ENCODE measurements at regions of chr11 and their contacts with region 1.

Region 1: GRCh38 chr11:9384535-9385303 is at the start of gene IPO7:
- DNase-seq: peak; percentile 83 to 97 (median 88)
- ATAC-seq: peak; percentile 96
- H3K4me3 ChIP-seq: peak within 1 kb of the TSS; percentile 90
- H3K27ac ChIP-seq: peak within 1 kb of the TSS; percentile 95
- H3K4me1 ChIP-seq: peaks cover 0 to 7% of the 10 kb centered on the region in 2 experiments; a peak in 3 of 5 replicates
- H3K27me3 ChIP-seq: no peaks in the 10 kb centered on the region
- CTCF ChIP-seq: no peak; a peak in 4 of 6 replicates
- EP300 ChIP-seq: no peak; the same call in 1 of the 2 replicates
- POLR2A ChIP-seq: peak; percentile 97
- RAD21 ChIP-seq: 0 out of 4 replicates have a peak, but pooled peaks of 1 of the 2 experiments have one; percentile 9
- polyA plus RNA-seq, gene IPO7: 23.6 to 28.7 TPM

Region 2: GRCh38 chr11:9314291-9315036 is 70.3 kb before region 1 on chr11 and contains the start of gene TMEM41B:
- CTCF ChIA-PET with region 1: no interaction called
- POLR2A ChIA-PET with region 1: interaction called, 18 read pairs
- in situ Hi-C with region 1: no loop called
- intact Hi-C with region 1: loop called (anchors 1 kb)
- DNase-seq: peak; percentile 99
- ATAC-seq: peak; percentile 95
- H3K4me3 ChIP-seq: peak within 1 kb of the TSS; percentile 97
- H3K27ac ChIP-seq: peak within 1 kb of the TSS; percentile 100
- H3K4me1 ChIP-seq: peaks cover 23 to 32% of the 10 kb centered on the region in 2 experiments
- H3K27me3 ChIP-seq: no peaks in the 10 kb centered on the region
- CTCF ChIP-seq: peak in 2 of 3 experiments; percentile 15 to 20; a peak in 2 of 6 replicates
- EP300 ChIP-seq: peak; percentile 68
- POLR2A ChIP-seq: peak; percentile 94
- RAD21 ChIP-seq: no peak; a peak in 1 of 4 replicates
- polyA plus RNA-seq, gene TMEM41B: 17.1 to 24.7 TPM

Region 3: GRCh38 chr11:9363954-9364912 is 20.5 kb before region 1 on chr11:
- CTCF ChIA-PET with region 1: no interaction called
- POLR2A ChIA-PET with region 1: interaction called, 29 read pairs
- in situ Hi-C with region 1: no loop called
- intact Hi-C with region 1: loop called (anchors 1 kb)
- DNase-seq: peak; percentile 90 to 99 (median 91)
- ATAC-seq: peak; percentile 96
- H3K4me3 ChIP-seq: peak overlapping the region; percentile 40
- H3K27ac ChIP-seq: peak overlapping the region; percentile 100
- H3K4me1 ChIP-seq: peaks cover 30 to 34% of the 10 kb centered on the region in 2 experiments
- H3K27me3 ChIP-seq: no peaks in the 10 kb centered on the region
- CTCF ChIP-seq: peak in 1 of 3 experiments; percentile 28; a peak in 2 of 6 replicates
- EP300 ChIP-seq: peak; percentile 83
- POLR2A ChIP-seq: peak; percentile 80
- RAD21 ChIP-seq: peak; percentile 28 to 38; a peak in 3 of 4 replicates

Region 4: DNA sequence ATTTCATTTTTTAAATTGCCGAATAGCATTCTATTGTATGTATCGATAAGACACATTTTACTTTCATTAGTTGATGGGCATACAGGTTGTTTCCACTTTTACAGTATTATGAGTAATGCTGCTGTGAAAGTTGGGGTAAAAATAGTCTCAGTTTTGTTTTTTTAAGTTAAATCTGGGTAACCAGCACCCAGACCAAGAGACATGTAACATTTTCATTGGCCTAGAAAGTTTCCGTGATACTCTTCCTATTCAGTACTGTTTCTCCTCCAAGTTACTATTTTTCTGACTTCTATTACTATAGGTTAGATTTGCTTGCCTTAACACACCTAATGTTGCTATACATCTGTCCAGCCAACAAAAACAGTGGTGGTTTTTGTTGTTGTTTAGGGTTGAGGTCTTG is 12.0 kb after region 1 on chr11:
- CTCF ChIA-PET with region 1: no interaction called
- POLR2A ChIA-PET with region 1: interaction called, 33 read pairs
- in situ Hi-C with region 1: no loop called
- intact Hi-C with region 1: no loop called
- DNase-seq: no peak
- ATAC-seq: no peak
- H3K4me3 ChIP-seq: no peak overlapping the region
- H3K27ac ChIP-seq: no peak overlapping the region; the same call in 2 of the 3 replicates
- H3K4me1 ChIP-seq: peaks cover 4 to 11% of the 10 kb centered on the region in 2 experiments; a peak in 3 of 5 replicates
- H3K27me3 ChIP-seq: no peaks in the 10 kb centered on the region
- CTCF ChIP-seq: no peak
- EP300 ChIP-seq: no peak
- POLR2A ChIP-seq: no peak
- RAD21 ChIP-seq: no peak

Region 5: DNA sequence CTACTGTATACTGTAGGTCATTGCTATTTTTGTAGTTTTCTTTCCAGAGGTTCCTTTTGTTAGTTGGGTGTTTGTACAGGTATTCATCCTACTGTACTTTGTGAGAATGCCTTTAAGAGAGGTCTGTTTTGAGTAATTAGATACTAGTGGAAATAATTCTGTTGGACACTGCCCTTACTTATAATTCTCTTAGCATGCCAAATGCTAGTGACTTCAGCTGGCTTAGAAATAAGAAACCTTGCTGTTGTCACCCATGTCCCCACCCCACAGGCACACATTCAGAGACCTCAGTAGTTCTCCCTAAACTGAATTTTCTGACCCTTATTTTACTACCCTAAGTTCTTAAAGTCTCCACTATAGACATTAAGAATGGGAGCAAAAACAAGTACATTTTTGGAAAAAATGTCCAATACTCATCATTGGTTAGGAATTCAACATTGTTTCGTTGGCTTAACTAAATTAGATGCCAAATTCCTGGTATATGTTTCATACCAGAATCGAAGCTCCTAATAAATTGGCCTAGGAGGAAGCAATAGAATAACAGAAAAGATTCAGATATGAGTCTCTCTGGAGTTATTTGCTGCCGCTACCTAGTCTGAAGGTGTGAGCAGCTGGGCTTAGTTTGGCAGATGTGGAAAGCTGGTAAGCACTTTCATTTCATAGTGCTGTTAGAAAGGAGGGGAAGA is 104.5 kb after region 1 on chr11:
- CTCF ChIA-PET with region 1: no interaction called
- POLR2A ChIA-PET with region 1: no interaction called
- in situ Hi-C with region 1: no loop called
- intact Hi-C with region 1: no loop called
- DNase-seq: no peak
- ATAC-seq: no peak
- H3K4me3 ChIP-seq: no peak overlapping the region
- H3K27ac ChIP-seq: no peak overlapping the region
- H3K4me1 ChIP-seq: no peaks in the 10 kb centered on the region
- H3K27me3 ChIP-seq: no peaks in the 10 kb centered on the region
- CTCF ChIP-seq: no peak
- EP300 ChIP-seq: no peak
- POLR2A ChIP-seq: no peak
- RAD21 ChIP-seq: no peak

Region 6: GRCh38 chr11:10387206-10388083 is 1002.7 kb after region 1 on chr11:
- CTCF ChIA-PET with region 1: no interaction called
- POLR2A ChIA-PET with region 1: no interaction called
- in situ Hi-C with region 1: no loop called
- intact Hi-C with region 1: no loop called
- DNase-seq: no peak
- ATAC-seq: no peak
- H3K4me3 ChIP-seq: no peak overlapping the region
- H3K27ac ChIP-seq: no peak overlapping the region
- H3K4me1 ChIP-seq: no peaks in the 10 kb centered on the region; a peak in 1 of 5 replicates
- H3K27me3 ChIP-seq: peaks cover 19 to 42% of the 10 kb centered on the region in 2 experiments
- CTCF ChIP-seq: no peak
- EP300 ChIP-seq: no peak
- POLR2A ChIP-seq: no peak
- RAD21 ChIP-seq: no peak